ENCODE measurements at regions of chr3 and their contacts with region 1.

Region 1: DNA sequence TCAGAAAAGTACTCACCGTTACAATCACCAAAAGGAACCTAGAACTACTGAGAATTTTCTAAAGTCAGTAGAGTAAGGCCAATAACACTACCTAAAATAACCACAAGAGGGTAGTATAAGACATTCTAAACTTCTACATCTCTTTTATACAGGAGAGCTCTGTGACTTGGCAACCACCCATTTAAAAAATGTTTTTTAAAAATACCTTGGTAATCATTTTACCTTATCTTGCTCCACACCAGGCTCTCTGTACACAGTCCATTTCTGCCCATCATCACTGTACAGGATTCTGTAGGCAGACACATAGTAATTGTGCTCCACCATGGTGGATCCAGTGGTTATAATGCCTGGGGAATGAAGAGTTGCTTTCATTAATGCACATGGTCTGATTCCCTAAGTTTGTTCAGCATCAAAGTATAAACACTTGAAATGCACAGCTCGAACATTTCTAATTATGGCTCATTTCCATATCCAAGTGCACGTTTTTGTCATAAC is 54.5 kb downstream of the ST3GAL6 start:
- DNase-seq: no peak
- H3K4me3 ChIP-seq: no peak overlapping the region
- H3K27ac ChIP-seq: no peak overlapping the region
- H3K4me1 ChIP-seq: no peaks in the 10 kb centered on the region
- H3K27me3 ChIP-seq: no peaks in the 10 kb centered on the region
- CTCF ChIP-seq: peak in 3 of 4 experiments; percentile 83 to 88 (median 86)
- POLR2A ChIP-seq: no peak

Region 2: DNA sequence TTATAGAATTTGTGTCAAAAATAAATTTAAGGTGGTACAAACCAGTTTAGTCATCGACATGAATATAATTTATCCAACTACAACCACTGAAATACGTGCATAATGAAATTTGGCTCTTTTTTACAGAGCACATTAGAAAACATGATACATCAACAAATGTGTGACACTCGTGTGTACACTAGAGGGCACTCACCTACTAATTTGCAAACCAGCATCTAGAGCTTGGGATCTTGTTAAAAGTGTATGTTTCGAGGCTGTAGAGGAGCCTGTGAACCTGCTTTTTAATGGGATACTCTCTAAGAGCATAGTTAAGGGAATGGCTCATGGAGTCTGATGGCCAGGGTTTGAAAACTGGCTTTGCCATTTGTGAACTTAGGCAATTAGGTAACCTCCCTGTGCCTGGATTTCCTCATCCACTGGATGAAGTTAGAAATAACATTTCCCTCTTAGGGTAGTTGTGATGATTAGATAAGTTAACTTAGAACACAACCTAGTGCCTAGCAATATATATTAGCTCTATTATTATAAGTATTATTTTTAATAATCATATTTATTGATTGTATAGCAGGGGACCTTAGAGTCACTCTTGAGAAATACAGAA is 215.4 kb before region 1 on chr3:
- intact Hi-C with region 1: loop called (anchors 5 kb)
- DNase-seq: peak; percentile 35
- H3K4me3 ChIP-seq: no peak overlapping the region
- H3K27ac ChIP-seq: no peak overlapping the region
- H3K4me1 ChIP-seq: no peaks in the 10 kb centered on the region
- H3K27me3 ChIP-seq: no peaks in the 10 kb centered on the region
- CTCF ChIP-seq: peak; percentile 51 to 73 (median 68)
- POLR2A ChIP-seq: no peak

Region 3: GRCh38 chr3:98741121-98741716 is 76.4 kb before region 1 on chr3:
- intact Hi-C with region 1: no loop called
- DNase-seq: no peak
- H3K4me3 ChIP-seq: no peak overlapping the region
- H3K27ac ChIP-seq: no peak overlapping the region
- H3K4me1 ChIP-seq: no peaks in the 10 kb centered on the region
- H3K27me3 ChIP-seq: no peaks in the 10 kb centered on the region
- CTCF ChIP-seq: no peak
- POLR2A ChIP-seq: no peak

Region 4: DNA sequence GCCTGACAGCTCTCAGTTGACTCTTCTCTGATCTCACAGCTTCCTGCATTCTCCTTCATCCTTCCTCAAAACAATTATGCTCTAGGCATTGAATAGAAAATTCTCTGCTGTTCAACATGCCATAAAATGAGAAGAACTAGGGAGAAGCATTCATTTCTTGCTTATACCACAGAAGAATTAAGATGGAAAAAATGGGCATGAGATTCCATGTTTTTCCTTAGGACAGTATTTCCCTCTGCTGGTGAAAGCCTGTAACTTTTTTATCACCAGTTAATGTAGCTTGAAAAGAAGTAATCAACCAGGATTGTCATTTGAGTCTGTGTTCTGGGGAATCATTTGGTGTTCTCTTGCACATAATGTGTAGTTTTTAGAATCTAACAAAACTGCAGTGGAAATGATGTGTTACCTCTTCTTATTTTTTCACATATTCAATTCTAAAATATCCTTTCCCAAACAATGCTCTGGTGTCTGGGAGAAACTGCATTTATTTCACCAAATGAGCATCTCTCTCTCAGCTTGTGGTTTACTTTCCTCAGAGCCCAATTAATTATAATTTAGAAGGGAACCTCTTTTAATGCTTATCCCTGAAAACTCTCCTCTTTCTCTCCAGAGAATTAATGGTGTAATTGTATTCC is 176.7 kb after region 1 on chr3:
- intact Hi-C with region 1: loop called (anchors 2 kb)
- DNase-seq: no peak
- H3K4me3 ChIP-seq: no peak overlapping the region
- H3K27ac ChIP-seq: no peak overlapping the region
- H3K4me1 ChIP-seq: no peaks in the 10 kb centered on the region
- H3K27me3 ChIP-seq: no peaks in the 10 kb centered on the region
- CTCF ChIP-seq: peak; percentile 40 to 82 (median 70)
- POLR2A ChIP-seq: no peak

Region 5: GRCh38 chr3:99753268-99753975 is 935.8 kb after region 1 on chr3:
- intact Hi-C with region 1: loop called (anchors 5 kb)
- DNase-seq: no peak
- H3K4me3 ChIP-seq: no peak overlapping the region
- H3K27ac ChIP-seq: no peak overlapping the region
- H3K4me1 ChIP-seq: no peaks in the 10 kb centered on the region
- H3K27me3 ChIP-seq: no peaks in the 10 kb centered on the region
- CTCF ChIP-seq: peak; percentile 21 to 63 (median 48)
- POLR2A ChIP-seq: no peak

Measured in prostate gland (tissue), 2 donors.